Esophagus squamous epithelium (tissue), 5 donors: ENCODE measurements at regions of chr14 and their contacts with region 1.

Region 1: DNA sequence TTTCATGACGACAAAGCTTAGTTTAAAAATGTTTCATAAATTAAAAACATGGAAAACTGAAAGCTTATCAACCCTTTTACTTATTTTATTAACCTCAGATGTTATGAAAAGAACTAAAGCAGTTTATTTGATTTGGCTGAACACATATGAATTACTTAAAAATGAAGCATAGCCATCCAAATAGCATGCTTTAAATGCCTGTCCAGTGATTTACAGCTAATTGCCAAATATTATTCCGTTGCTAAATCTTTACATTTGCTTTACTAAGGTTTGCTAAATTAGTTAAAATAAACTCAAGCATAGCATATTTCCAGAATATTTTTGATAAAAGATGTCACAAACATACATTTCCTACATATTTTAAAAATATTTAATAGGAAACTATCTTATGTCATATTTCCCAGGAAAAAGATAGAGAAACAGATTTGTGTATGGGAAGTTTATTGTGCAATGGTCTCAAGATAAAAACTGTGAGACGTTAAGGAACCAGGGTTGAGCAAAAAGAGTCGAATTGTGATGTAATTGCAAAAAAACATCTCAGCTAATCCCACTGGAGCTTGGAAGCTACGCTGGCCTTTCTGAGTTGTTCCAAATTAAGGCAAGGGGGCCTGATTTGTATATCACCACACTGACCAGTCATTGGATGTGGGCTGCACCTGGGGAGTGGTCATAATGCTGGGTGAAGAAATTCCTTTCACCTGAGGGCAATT is 25.8 kb downstream of the GPR135 start:
- DNase-seq: no peak
- H3K4me3 ChIP-seq: no peak overlapping the region
- H3K27ac ChIP-seq: peak overlapping the region in 2 of 4 donors; percentile 0 to 38
- H3K4me1 ChIP-seq: peaks cover 0 to 6% (median 0%) of the 10 kb centered on the region in 3 donors
- H3K27me3 ChIP-seq: no peaks in the 10 kb centered on the region
- CTCF ChIP-seq: no peak
- POLR2A ChIP-seq: no peak

Region 2: GRCh38 chr14:59126710-59127432 is 312.5 kb before region 1 on chr14:
- intact Hi-C with region 1: loop called (anchors 2 kb)
- DNase-seq: no peak
- H3K4me3 ChIP-seq: no peak overlapping the region
- H3K27ac ChIP-seq: no peak overlapping the region
- H3K4me1 ChIP-seq: no peaks in the 10 kb centered on the region
- H3K27me3 ChIP-seq: no peaks in the 10 kb centered on the region
- CTCF ChIP-seq: peak; percentile 38 to 87 (median 78)
- POLR2A ChIP-seq: no peak

Region 3: GRCh38 chr14:59245809-59246295 is 193.6 kb before region 1 on chr14:
- intact Hi-C with region 1: no loop called
- DNase-seq: no peak
- H3K4me3 ChIP-seq: no peak overlapping the region
- H3K27ac ChIP-seq: peak overlapping the region in 2 of 4 donors; percentile 64 to 73
- H3K4me1 ChIP-seq: peaks cover 12 to 88% (median 15%) of the 10 kb centered on the region in 3 donors
- H3K27me3 ChIP-seq: no peaks in the 10 kb centered on the region
- CTCF ChIP-seq: no peak
- POLR2A ChIP-seq: no peak

Region 4: DNA sequence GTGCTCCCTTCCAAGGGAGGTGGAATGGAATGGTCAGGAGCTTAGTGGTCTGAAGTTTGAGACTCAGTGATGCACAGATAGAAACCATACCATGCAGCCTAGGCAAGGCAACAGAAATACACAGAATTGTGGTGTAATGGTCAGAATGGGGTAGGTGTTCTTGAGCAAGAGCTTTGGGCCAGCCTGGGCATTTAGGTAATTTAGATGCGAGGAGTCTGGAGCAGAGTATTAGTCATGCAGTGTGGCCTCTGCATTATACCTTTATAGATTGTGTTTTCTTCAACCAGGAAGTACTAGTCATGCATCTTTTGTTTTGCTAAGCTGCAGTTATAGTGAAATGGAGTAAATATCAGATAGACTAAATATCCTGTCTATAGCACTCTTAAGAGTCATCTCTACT is 132.6 kb before region 1 on chr14:
- intact Hi-C with region 1: no loop called
- DNase-seq: no peak
- H3K4me3 ChIP-seq: no peak overlapping the region
- H3K27ac ChIP-seq: no peak overlapping the region
- H3K4me1 ChIP-seq: peaks cover 0 to 49% (median 12%) of the 10 kb centered on the region in 3 donors
- H3K27me3 ChIP-seq: no peaks in the 10 kb centered on the region
- CTCF ChIP-seq: no peak
- POLR2A ChIP-seq: no peak